HAP-1 (cell line): ENCODE measurements at regions of chr4 and their contacts with region 1.

Region 1: DNA sequence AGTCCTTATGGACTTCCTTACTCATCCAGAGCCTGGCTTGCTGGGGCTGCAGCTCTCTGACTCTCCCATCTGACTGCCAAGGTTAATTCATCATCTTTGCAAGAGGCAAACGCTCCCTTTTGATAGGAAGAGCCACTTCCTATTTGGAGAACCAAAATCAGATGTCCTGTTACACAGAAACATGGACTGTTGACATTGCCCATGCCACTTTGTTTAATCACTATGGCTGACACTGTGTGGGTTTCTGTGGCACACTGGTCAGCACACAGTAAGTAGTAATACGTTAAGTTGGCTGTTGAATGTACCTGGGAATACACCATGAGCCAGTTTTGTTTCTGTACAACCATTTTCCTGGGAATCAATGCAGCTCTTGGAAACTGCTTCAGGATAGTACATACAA is 45.1 kb upstream of the TMEM33 start:
- DNase-seq: no peak
- H3K4me3 ChIP-seq: no peak overlapping the region
- H3K4me1 ChIP-seq: peaks cover 13% of the 10 kb centered on the region
- H3K27me3 ChIP-seq: no peaks in the 10 kb centered on the region

Region 2: DNA sequence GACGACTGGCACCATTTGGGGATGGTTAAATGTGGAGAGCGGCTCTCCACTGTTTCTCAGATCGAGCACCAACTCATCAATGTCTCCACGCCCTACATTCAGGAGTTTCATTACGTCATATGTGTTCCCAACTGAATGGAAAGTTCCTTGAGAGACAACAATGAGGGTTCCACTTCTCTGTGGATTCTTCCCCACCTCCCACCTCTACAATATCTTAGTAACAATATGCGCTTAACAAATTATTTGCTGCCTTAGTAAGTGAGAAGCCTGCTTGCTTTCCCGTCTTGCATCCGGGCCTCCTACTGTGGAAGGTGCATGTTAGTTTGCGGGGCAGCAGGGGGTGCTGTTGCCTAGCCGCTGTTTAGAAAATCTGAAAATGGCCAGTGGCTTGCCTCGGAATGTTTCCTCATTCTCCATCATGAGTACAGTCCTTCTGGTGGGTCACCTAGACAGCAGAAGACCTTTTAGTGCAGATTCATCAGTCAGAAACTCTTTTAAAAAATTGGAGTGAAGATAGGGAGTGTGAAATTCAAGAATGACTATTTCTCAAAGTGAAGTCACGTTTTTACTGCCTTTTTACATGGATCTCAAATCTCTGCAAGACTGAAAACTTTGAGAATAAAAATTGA is 197.3 kb before region 1 on chr4:
- in situ Hi-C with region 1: loop called (anchors 5 kb)
- DNase-seq: peak; percentile 72 to 73
- H3K4me3 ChIP-seq: no peak overlapping the region
- H3K4me1 ChIP-seq: peaks cover 11% of the 10 kb centered on the region
- H3K27me3 ChIP-seq: no peaks in the 10 kb centered on the region